Activated CD4-positive, alpha-beta T cell treated with anti-CD3 and anti-CD28 coated beads for 36 hours (primary cell): ENCODE measurements at regions of chr7 and their contacts with region 1.

Region 1: DNA sequence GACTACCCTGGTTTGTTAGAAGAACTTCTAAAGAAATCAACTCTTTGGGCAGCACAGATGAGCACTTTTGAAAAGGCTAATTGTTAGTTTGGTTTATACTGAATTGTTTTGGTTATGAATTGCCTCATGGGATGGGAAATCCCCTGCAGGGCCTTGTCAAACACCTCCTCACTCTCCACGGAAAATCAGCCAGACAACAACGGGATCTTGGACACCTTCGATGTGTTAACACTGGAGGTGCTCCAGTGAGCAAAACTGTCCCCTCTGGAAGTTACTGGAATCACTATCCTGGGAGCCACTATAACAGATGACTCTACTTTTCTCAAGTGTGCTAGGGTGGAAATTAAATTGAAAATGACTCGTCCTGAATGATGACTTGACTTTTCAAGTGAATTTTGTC is 38.7 kb downstream of the CDK6 start:
- DNase-seq: peak; percentile 50
- ATAC-seq: peak; percentile 81
- H3K4me3 Mint-ChIP-seq: no peak overlapping the region
- H3K27ac Mint-ChIP-seq: no peak overlapping the region
- H3K4me1 Mint-ChIP-seq: peaks cover 34% of the 10 kb centered on the region
- H3K27me3 Mint-ChIP-seq: no peaks in the 10 kb centered on the region

Region 2: DNA sequence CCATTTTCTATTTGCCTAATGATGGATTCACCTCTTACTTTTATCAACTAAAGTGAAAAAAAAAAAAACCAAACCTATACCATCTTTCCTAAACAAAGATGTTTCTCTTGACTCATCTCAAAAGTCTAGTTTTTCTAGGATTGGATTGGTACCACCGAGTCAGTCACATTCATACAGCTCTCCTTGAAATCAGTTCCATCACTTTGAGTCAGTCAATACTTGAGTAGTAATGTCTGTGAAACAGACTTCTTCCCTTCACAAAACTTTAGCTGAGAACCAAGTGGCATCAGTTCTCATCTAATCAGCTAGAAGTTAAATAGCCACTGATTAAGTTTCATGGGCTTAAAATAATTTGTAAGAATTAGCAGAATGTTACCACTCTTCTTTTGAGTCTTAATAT is 25.3 kb after region 1 on chr7:
- CTCF ChIA-PET with region 1: no interaction called
- POLR2A ChIA-PET with region 1: no interaction called
- intact Hi-C with region 1: loop called in 1 of 2 experiments (anchors 2 kb)
- DNase-seq: no peak
- ATAC-seq: peak; percentile 50
- H3K4me3 Mint-ChIP-seq: no peak overlapping the region
- H3K27ac Mint-ChIP-seq: peak overlapping the region; percentile 62
- H3K4me1 Mint-ChIP-seq: peaks cover 83% of the 10 kb centered on the region
- H3K27me3 Mint-ChIP-seq: no peaks in the 10 kb centered on the region